Activated CD4-positive, alpha-beta memory T cell treated with anti-CD3 and anti-CD28 coated beads for 36 hours (primary cell): ENCODE measurements at regions of chr16 and their contacts with region 1.

Region 1: DNA sequence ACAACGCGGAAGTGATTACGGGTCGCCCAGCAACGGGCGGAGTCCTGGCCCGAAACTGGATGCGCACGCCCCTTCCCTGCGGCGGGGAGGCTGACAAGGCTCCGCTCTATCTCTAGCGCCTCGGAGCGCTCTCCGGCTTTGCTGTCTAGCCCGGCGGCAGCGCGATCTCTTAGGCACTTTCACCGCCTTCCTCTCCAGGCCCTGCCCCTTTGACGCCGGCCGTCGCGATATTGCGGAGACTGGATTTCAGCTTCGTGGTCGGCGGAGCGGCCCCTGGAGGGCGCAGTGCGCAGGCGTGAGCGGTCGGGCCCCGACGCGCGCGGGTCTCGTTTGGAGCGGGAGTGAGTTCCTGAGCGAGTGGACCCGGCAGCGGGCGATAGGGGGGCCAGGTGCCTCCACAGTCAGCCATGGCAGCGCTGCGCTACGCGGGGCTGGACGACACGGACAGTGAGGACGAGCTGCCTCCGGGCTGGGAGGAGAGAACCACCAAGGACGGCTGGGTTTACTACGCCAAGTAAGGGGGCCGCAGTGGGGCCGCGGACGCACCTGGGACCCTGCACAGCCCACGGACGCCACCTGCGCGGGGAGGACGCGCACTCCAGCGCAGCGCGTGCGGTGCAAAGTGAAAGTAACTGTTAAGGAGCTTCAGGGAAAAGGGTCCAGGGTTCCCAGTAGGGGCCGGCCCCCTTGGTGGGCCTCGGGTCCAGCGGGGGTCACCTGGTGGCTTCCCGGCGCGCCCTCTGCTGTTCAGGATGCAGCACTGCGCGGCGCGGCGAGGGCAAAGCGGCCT is at the start of gene WWOX:
- DNase-seq: peak; percentile 97
- H3K4me3 Mint-ChIP-seq: peak within 1 kb of the TSS; percentile 86
- H3K27ac Mint-ChIP-seq: peak within 1 kb of the TSS; percentile 91
- H3K4me1 Mint-ChIP-seq: peaks cover 38% of the 10 kb centered on the region
- H3K27me3 Mint-ChIP-seq: peaks cover 5% of the 10 kb centered on the region
- total RNA-seq, gene WWOX: 14.3 to 16.5 TPM

Region 2: GRCh38 chr16:77308163-77308561 is 791.4 kb before region 1 on chr16:
- CTCF ChIA-PET with region 1: no interaction called
- POLR2A ChIA-PET with region 1: no interaction called
- intact Hi-C with region 1: loop called (anchors 5 kb)
- DNase-seq: no peak
- H3K4me3 Mint-ChIP-seq: no peak overlapping the region
- H3K27ac Mint-ChIP-seq: peak overlapping the region; percentile 72
- H3K4me1 Mint-ChIP-seq: peaks cover 18% of the 10 kb centered on the region
- H3K27me3 Mint-ChIP-seq: peaks cover 14% of the 10 kb centered on the region

Region 3: DNA sequence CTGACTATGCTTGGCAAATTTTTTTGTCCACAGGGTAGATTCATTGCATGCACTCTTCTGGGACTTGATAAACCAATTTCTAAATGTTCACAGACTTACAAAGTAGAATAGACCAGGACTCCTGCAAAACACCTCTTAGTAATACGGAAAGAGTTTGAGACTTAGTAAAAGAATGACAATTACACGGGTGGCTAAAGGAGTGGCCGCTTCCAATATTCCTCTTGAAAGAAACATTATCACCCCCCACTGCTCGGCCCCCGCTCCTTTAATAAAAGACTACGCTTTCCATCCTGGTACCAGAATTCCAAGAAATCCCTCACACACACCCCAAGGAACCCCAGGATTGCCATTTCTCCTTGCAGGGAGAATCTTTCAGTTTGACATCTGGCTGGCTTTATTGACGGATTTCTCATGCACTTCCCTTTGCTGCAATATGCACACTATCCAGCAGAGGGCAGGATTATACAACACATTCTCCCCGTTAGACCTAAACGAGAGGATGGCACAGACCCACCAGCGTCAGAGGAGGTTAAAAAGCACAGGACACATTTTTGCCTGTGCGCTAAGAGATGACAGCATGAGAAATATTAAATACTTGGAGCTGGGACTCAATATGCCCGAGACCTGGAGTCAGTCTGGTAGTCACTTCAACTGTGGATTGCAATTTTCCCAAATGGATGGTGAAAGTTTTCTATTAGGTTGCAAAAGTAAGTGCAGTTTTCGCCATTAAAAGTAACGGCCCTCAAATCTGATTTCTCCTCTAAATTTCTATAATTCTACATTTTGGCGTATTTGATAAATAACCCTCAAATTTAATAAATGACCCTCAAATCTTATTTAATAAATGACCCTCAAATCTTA is 423.9 kb before region 1 on chr16:
- CTCF ChIA-PET with region 1: no interaction called
- POLR2A ChIA-PET with region 1: no interaction called
- intact Hi-C with region 1: loop called (anchors 10 kb)
- DNase-seq: peak; percentile 70
- H3K4me3 Mint-ChIP-seq: no peak overlapping the region
- H3K27ac Mint-ChIP-seq: no peak overlapping the region
- H3K4me1 Mint-ChIP-seq: no peaks in the 10 kb centered on the region
- H3K27me3 Mint-ChIP-seq: peaks cover 8% of the 10 kb centered on the region

Region 4: DNA sequence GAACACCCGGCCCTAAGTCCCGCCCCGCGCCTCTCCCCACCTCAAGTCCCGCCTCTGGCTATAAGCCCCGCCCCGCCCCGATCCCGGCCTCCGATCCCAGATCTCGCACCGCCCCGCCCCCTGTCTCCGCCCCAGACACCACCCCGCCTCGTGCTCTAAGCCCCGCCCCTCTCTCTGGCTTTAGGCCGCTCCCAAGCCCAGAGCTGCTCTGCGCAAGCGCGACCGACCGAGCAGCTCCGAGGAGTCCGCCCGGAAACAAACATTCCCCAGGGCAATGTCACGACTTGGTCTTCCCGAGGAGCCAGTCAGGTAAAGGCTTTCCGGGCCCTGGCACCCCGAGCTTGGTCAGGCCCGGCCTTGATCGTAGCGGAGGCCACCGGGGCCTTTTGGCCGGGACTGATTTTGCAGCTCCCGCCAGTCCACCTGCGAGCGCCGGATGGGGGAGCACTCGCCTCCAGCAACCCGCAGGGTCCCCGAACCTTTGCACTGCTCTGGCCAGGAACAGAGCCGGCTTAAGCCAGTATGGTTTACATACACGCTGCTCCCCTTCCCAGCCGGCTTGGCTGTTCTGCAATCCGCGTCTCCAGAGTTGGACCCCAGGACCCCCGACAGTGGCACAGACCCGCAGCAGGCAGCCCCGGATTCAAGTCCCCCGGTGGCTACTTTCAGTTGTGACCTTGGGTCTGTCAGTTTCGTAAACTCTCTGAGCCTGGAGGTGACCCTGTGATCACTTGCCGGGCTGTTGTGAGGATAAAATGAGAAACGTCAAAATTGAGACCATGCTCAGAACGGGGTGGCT is 377.1 kb before region 1 on chr16 and contains the start of gene NUDT7:
- CTCF ChIA-PET with region 1: no interaction called
- POLR2A ChIA-PET with region 1: no interaction called
- intact Hi-C with region 1: loop called (anchors 1 kb)
- DNase-seq: peak; percentile 98
- H3K4me3 Mint-ChIP-seq: peak within 1 kb of the TSS; percentile 81
- H3K27ac Mint-ChIP-seq: peak within 1 kb of the TSS; percentile 79
- H3K4me1 Mint-ChIP-seq: peaks cover 13% of the 10 kb centered on the region
- H3K27me3 Mint-ChIP-seq: no peaks in the 10 kb centered on the region
- total RNA-seq, gene NUDT7: 8.2 to 10.1 TPM

Region 5: GRCh38 chr16:77961836-77962235 is 137.7 kb before region 1 on chr16:
- CTCF ChIA-PET with region 1: no interaction called
- POLR2A ChIA-PET with region 1: no interaction called
- intact Hi-C with region 1: no loop called
- DNase-seq: no peak
- H3K4me3 Mint-ChIP-seq: no peak overlapping the region
- H3K27ac Mint-ChIP-seq: no peak overlapping the region
- H3K4me1 Mint-ChIP-seq: no peaks in the 10 kb centered on the region
- H3K27me3 Mint-ChIP-seq: peaks cover 30% of the 10 kb centered on the region

Region 6: DNA sequence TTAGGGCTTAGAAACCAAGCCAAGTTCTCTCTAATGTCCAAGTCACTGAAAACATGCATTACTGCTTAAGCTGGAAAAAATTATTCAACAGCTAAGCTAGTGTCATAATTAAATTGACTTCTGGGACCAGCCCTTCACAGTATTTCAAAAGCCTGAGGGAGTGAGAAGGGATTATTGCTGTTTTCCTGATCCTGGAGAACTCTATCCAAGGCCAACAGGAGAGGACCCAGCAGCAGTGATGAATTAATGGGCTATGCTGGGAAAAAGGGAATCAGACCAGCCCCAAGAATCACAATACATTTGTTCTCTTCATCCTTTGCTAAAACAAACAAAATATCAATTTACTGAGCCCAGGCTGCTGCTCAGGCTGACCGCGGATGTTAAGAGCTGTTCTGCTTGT is 111.8 kb before region 1 on chr16:
- CTCF ChIA-PET with region 1: no interaction called
- POLR2A ChIA-PET with region 1: no interaction called
- intact Hi-C with region 1: no loop called
- DNase-seq: no peak
- H3K4me3 Mint-ChIP-seq: no peak overlapping the region
- H3K27ac Mint-ChIP-seq: no peak overlapping the region
- H3K4me1 Mint-ChIP-seq: no peaks in the 10 kb centered on the region
- H3K27me3 Mint-ChIP-seq: peaks cover 9% of the 10 kb centered on the region

Region 7: DNA sequence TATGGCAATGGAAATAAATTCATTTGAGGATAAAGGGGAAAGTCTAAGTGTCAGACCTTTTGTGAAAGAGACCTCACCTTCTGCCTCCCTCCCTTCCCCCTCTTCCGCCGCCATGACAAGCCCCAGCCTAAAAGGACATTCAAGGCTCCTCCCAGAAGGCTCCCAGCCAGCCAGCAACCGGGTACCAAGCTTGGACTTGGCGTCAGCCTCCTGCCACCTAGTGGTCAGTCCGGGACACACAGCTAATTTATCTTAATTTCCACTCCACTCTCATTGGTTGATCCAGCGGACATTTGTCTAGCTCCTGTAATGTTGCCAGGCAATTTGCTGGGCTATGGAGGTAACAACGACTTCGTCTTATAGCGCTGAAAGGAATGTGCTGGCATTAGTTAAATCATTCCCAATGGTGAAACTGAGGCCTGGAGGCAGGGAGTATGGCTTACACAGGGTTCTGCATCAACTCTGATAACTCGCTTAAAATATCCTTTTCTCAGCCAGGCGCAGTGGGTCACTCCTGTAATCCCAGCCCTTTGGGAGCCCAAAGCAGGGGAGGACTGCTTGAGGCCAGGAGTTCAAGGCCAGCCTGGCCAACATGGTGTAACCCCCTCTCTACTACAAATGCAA is 96.5 kb before region 1 on chr16:
- CTCF ChIA-PET with region 1: interaction called, 9 read pairs
- POLR2A ChIA-PET with region 1: no interaction called
- intact Hi-C with region 1: loop called (anchors 1 kb)
- DNase-seq: peak; percentile 87
- H3K4me3 Mint-ChIP-seq: no peak overlapping the region
- H3K27ac Mint-ChIP-seq: no peak overlapping the region
- H3K4me1 Mint-ChIP-seq: peaks cover 2% of the 10 kb centered on the region
- H3K27me3 Mint-ChIP-seq: peaks cover 11% of the 10 kb centered on the region